Transverse colon (tissue), 4 donors: ENCODE measurements at regions of chr14 and their contacts with region 1.

Region 1: GRCh38 chr14:20343092-20343861 is at the start of gene PARP2:
- DNase-seq: peak; percentile 96
- H3K4me3 ChIP-seq: peak within 1 kb of the TSS; percentile 57 to 65 (median 60)
- H3K27ac ChIP-seq: peak within 1 kb of the TSS; percentile 94 to 98 (median 96)
- H3K4me1 ChIP-seq: peaks cover 0 to 7% (median 2%) of the 10 kb centered on the region in 4 donors
- H3K27me3 ChIP-seq: no peaks in the 10 kb centered on the region
- CTCF ChIP-seq: peak in 1 of 5 experiments; percentile 17
- EP300 ChIP-seq: no peak
- POLR2A ChIP-seq: peak; percentile 93
- total RNA-seq, gene PARP2: 4.4 to 96.5 (median 9.1) TPM

Region 2: GRCh38 chr14:20454516-20455354 is 111.5 kb after region 1 on chr14 and contains the starts of genes APEX1 and OSGEP:
- in situ Hi-C with region 1: loop called in 2 of 4 experiments (anchors 25 kb)
- intact Hi-C with region 1: no loop called
- DNase-seq: peak; percentile 99
- H3K4me3 ChIP-seq: peak within 1 kb of the TSS; percentile 59 to 76 (median 72)
- H3K27ac ChIP-seq: peak within 1 kb of the TSS; percentile 94 to 96 (median 94)
- H3K4me1 ChIP-seq: peaks cover 16 to 35% (median 24%) of the 10 kb centered on the region in 4 donors
- H3K27me3 ChIP-seq: no peaks in the 10 kb centered on the region
- CTCF ChIP-seq: peak in 1 of 5 experiments; percentile 15
- EP300 ChIP-seq: no peak
- POLR2A ChIP-seq: peak; percentile 93
- total RNA-seq, gene APEX1: 108 to 120 (median 111) TPM
- total RNA-seq, gene OSGEP: 26.7 to 146 (median 64.7) TPM

Region 3: GRCh38 chr14:20530771-20531571 is 187.7 kb after region 1 on chr14:
- in situ Hi-C with region 1: no loop called
- intact Hi-C with region 1: no loop called
- DNase-seq: peak; percentile 80
- H3K4me3 ChIP-seq: no peak overlapping the region
- H3K27ac ChIP-seq: no peak overlapping the region
- H3K4me1 ChIP-seq: no peaks in the 10 kb centered on the region
- H3K27me3 ChIP-seq: peaks cover 8% of the 10 kb centered on the region
- CTCF ChIP-seq: peak; percentile 50 to 72 (median 66)
- EP300 ChIP-seq: no peak
- POLR2A ChIP-seq: no peak